HepG2 (cell line): ENCODE measurements at regions of chr12 and their contacts with region 1.

Region 1: GRCh38 chr12:110826592-110827200 is 20.1 kb upstream of the CCDC63 start:
- DNase-seq: peak; percentile 80
- ATAC-seq: peak; percentile 90
- H3K4me3 ChIP-seq: peak overlapping the region in 1 of 3 experiments; percentile 43; a peak in 1 of 6 replicates
- H3K27ac ChIP-seq: no peak overlapping the region
- H3K4me1 ChIP-seq: peaks cover 33% of the 10 kb centered on the region
- H3K27me3 ChIP-seq: no peaks in the 10 kb centered on the region; a peak in 1 of 5 replicates
- CTCF ChIP-seq: peak; percentile 98
- EP300 ChIP-seq: no peak
- POLR2A ChIP-seq: no peak
- RAD21 ChIP-seq: peak; percentile 95

Region 2: GRCh38 chr12:110704748-110705147 is 121.9 kb before region 1 on chr12:
- CTCF ChIA-PET with region 1: interaction called, 16 read pairs
- POLR2A ChIA-PET with region 1: interaction called, 4 read pairs
- in situ Hi-C with region 1: loop called (anchors 5 kb)
- intact Hi-C with region 1: loop called (anchors 1 kb)
- DNase-seq: peak; percentile 68
- ATAC-seq: peak; percentile 89
- H3K4me3 ChIP-seq: 0 out of 6 replicates have a peak overlapping the region, but pooled peaks of 2 of the 3 experiments have one; percentile 6 to 50
- H3K27ac ChIP-seq: no peak overlapping the region
- H3K4me1 ChIP-seq: peaks cover 14% of the 10 kb centered on the region
- H3K27me3 ChIP-seq: 0 out of 5 replicates have a peak, but pooled peaks cover 0 to 5% of the 10 kb centered on the region in 2 experiments
- CTCF ChIP-seq: peak; percentile 79
- EP300 ChIP-seq: no peak
- POLR2A ChIP-seq: no peak
- RAD21 ChIP-seq: peak; percentile 48; the same call in 1 of the 2 replicates

Region 3: DNA sequence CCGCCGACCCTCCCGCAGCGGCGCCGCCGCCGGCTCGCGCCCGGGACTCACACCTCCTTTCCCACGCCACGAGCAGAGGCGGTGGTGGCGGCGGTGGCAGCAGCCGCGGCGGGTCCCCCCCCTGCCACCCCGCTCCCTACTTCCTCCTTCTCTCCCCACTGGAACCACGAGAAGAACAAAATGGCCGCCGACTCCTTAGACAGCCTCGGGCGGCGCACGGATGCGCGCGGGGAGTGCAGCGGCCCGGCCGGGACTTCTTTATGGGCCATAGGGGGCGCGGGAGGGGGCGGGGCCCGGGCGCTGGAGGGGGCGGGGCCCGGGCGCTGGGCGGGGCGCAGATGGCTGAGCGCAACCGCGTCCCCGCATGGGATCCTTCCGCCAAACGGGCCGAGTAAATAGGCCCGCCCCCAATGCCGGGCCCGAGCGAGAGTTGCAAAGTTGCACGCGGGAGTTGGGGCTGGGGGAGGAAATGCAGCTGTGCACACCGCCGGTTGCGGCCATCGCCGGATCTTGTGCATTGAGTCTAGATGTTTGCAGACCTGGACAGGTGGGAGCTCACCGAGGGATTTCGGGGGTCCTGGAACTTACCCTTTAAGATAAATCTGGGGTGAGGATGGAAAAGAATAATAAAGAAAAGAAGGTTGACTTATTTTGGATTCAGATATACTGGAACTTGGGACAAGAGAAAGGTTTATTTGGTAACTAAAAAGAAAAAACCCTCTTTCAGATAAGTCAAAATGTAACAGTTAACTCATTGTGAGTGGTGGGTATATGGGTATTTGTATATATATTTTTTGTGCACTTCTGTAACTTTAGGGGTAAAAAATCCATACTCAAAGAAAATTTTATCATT is 83.8 kb before region 1 on chr12 and contains the start of gene PPP1CC:
- CTCF ChIA-PET with region 1: no interaction called
- POLR2A ChIA-PET with region 1: interaction called, 3 read pairs
- in situ Hi-C with region 1: loop called (anchors 5 kb)
- intact Hi-C with region 1: loop called (anchors 5 kb)
- DNase-seq: peak; percentile 88
- ATAC-seq: peak; percentile 80
- H3K4me3 ChIP-seq: peak within 1 kb of the TSS; percentile 86 to 96 (median 96)
- H3K27ac ChIP-seq: peak within 1 kb of the TSS; percentile 87
- H3K4me1 ChIP-seq: peaks cover 54% of the 10 kb centered on the region
- H3K27me3 ChIP-seq: no peaks in the 10 kb centered on the region; a peak in 2 of 5 replicates
- CTCF ChIP-seq: no peak
- EP300 ChIP-seq: no peak; a peak in 1 of 4 replicates
- POLR2A ChIP-seq: peak; percentile 72 to 78
- RAD21 ChIP-seq: no peak
- total RNA-seq, gene PPP1CC: 187 and 277 TPM in 2 replicates

Region 4: GRCh38 chr12:110888256-110888991 is 61.7 kb after region 1 on chr12:
- CTCF ChIA-PET with region 1: interaction called, 4 read pairs
- POLR2A ChIA-PET with region 1: no interaction called
- in situ Hi-C with region 1: no loop called
- intact Hi-C with region 1: loop called (anchors 2 kb)
- DNase-seq: no peak
- ATAC-seq: no peak
- H3K4me3 ChIP-seq: no peak overlapping the region
- H3K27ac ChIP-seq: no peak overlapping the region
- H3K4me1 ChIP-seq: no peaks in the 10 kb centered on the region
- H3K27me3 ChIP-seq: peaks cover 2 to 6% of the 10 kb centered on the region in 2 experiments; a peak in 3 of 5 replicates
- CTCF ChIP-seq: no peak
- EP300 ChIP-seq: no peak
- POLR2A ChIP-seq: no peak
- RAD21 ChIP-seq: no peak